BJ (cell line): ENCODE measurements at regions of chr11 and their contacts with region 1.

Region 1: GRCh38 chr11:61173456-61173855 is 12.2 kb upstream of the VPS37C start:
- DNase-seq: no peak
- H3K4me3 ChIP-seq: no peak overlapping the region
- H3K27me3 ChIP-seq: peaks cover 10% of the 10 kb centered on the region
- CTCF ChIP-seq: peak; percentile 24

Region 2: GRCh38 chr11:61187505-61188130 is 14.2 kb after region 1 on chr11:
- CTCF ChIA-PET with region 1: interaction called, 19 read pairs
- POLR2A ChIA-PET with region 1: no interaction called
- DNase-seq: peak; percentile 16
- H3K4me3 ChIP-seq: no peak overlapping the region
- H3K27me3 ChIP-seq: no peaks in the 10 kb centered on the region; the same call in 1 of the 2 replicates
- CTCF ChIP-seq: peak; percentile 94

Region 3: DNA sequence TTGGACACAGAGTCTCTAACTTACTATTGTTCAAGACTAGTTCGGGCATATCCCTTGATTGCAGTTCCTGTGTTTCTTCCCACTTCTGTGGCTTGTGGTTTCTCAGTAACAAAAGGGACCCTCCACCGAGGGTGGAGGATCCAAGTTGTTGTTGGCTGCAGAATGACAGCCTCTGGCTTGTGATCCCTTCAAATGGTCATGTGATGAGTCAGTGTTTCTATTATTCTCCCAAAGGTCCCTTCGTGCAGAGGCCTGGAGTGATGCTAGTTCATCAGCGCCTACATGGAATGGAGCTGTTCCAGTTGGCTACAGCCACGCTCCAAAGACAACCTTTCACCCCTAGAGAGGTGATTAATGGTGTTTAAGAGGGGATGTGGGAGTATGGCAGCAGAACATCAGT is 124.3 kb after region 1 on chr11:
- CTCF ChIA-PET with region 1: no interaction called
- POLR2A ChIA-PET with region 1: no interaction called
- DNase-seq: peak; percentile 75
- H3K4me3 ChIP-seq: no peak overlapping the region
- H3K27me3 ChIP-seq: no peaks in the 10 kb centered on the region
- CTCF ChIP-seq: no peak